GM10248 (cell line): ENCODE measurements at regions of chr2 and their contacts with region 1.

Region 1: GRCh38 chr2:186503848-186504606 is 18.0 kb downstream of the ZC3H15 start:
- DNase-seq: peak; percentile 15
- CTCF ChIP-seq: peak; percentile 39

Region 2: DNA sequence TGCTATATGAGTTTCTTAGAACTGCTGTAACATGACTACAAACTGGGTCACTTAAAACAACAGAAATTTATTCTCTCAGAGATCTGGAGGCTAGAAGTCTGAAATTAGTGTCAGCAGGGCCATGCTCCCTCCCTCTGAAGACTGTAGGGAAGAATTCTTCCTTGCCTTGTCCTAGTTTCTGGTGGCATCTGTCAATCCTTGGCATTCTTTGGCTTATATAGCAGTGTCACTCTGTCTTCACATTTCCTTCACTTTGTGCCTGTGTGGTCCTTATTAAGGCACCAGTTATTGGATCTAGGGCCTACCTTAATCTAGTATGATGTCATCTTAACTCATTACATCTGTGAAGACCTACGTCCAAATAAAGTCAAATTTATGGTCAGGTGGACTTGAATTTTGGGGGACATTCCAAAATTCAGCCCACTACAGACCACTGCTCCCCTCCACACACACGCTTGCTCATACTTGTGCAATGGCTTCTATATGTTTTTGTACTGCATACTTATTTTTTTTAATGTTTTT is 10.4 kb before region 1 on chr2:
- CTCF ChIA-PET with region 1: interaction called, 39 read pairs
- POLR2A ChIA-PET with region 1: no interaction called
- DNase-seq: no peak
- CTCF ChIP-seq: no peak

Region 3: GRCh38 chr2:186518945-186519344 is 14.9 kb after region 1 on chr2:
- CTCF ChIA-PET with region 1: interaction called, 18 read pairs
- POLR2A ChIA-PET with region 1: no interaction called
- DNase-seq: no peak
- CTCF ChIP-seq: no peak

Region 4: DNA sequence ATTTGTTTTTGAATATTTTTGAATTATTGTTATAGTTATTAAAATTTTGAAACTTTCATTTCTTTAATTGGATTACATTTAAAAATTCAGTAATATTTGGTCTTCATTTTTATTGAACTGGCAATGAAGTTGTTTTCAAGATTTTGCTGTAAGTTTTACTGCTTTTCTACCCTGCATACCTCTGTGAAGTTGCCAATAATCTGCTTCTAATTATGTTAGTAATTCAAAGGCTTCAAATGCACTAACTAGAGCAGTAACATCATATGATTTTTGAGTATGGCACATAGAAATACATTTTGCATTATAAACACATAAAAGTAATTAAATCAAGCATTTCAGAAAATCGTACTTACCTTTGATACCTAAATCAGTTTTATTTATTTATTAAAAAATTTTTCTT is 149.5 kb after region 1 on chr2:
- CTCF ChIA-PET with region 1: no interaction called
- POLR2A ChIA-PET with region 1: no interaction called
- DNase-seq: no peak
- CTCF ChIP-seq: no peak

Region 5: DNA sequence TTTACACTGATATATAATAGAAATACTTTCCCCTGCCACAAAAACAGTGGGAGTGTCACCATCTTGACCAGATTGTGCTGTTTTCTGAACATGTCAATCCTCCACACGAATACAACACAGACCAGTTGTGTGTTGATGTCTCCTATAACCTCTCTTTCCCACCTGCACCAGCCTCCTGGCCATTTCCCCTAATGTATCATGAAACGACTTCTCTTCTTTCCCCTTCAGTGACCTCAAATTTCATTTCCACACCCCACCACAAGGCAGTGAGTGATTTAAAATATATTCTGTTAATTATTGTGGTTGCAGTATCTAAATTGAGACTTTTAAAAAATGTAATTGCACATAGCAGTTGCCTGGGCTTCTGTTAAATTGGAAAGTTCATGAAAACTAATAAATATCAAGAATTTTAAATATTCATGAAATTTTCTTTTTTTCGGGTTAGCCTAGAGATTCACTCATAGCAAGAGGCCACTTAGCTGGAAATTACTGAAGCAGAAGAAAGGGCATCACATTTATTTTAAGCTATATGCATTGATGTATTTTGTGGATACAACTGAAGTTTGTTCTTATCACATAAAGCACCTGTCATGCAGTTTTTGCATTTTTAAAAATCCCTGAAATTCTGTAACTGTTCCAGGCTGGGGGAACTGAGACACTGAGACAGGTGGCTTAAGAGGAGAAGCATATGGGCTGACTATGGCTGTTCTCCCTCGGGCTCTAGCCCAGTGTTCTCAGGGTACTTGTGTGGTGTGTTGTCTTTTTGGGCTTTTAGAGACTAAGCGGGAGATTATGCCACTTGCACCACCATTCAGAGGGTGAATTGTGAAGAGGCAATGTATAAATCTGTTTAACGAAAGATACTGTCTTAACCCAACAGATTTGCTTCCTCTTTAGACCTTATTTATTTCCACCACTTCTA is 205.8 kb after region 1 on chr2:
- CTCF ChIA-PET with region 1: no interaction called
- POLR2A ChIA-PET with region 1: no interaction called
- DNase-seq: no peak
- CTCF ChIP-seq: no peak